ENCODE measurements at regions of chr2 and their contacts with region 1.

Region 1: GRCh38 chr2:237207646-237208045 is 122.0 kb downstream of the COPS8 start:
- DNase-seq: peak; percentile 43 to 82
- H3K4me3 ChIP-seq: no peak overlapping the region
- H3K27ac ChIP-seq: no peak overlapping the region
- H3K4me1 ChIP-seq: peaks cover 22% of the 10 kb centered on the region
- H3K27me3 ChIP-seq: no peaks in the 10 kb centered on the region
- CTCF ChIP-seq: no peak

Region 2: GRCh38 chr2:237223201-237223861 is 15.7 kb after region 1 on chr2:
- CTCF ChIA-PET with region 1: interaction called, 3 read pairs
- POLR2A ChIA-PET with region 1: interaction called, 13 read pairs
- intact Hi-C with region 1: loop called (anchors 2 kb)
- DNase-seq: peak; percentile 60 to 71
- H3K4me3 ChIP-seq: no peak overlapping the region
- H3K27ac ChIP-seq: 0 out of 2 replicates have a peak overlapping the region, but pooled peaks have one; percentile 30
- H3K4me1 ChIP-seq: peaks cover 28% of the 10 kb centered on the region
- H3K27me3 ChIP-seq: no peaks in the 10 kb centered on the region
- CTCF ChIP-seq: no peak

Measured in PC-9 (cell line).